Caco-2 (cell line): ENCODE measurements at regions of chr13 and their contacts with region 1.

Region 1: DNA sequence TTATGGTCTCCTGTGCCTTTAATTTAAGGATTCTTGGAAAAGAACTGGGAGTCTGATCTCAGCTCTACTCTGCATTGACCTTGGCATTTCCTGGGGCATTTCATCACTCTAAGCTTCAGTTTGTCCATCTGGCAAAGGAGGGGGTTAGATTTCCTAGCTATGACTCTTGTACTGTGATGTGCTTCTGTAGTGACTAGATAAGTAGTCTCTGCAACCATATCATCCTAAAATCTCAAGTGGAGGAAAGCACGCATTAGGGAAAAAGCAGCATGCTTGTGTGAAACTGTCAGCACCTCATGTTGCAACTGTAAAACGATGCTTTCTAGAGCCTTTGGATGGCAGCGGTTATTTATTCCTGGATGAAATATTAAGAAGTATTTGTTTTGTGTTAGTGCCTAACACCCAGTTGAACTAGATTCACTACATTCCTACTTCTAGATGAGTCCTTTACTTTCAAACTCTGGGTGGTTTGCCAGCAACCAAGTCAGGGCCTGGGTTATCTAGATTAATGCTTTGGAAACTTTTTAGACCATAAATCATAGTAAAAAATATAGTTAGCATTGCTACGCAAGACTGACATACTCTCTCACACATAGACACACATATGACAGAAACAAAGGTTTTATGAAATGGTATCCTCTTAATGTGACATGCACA is 6.8 kb downstream of the WDFY2 start:
- DNase-seq: peak in 1 of 2 experiments; percentile 20
- H3K4me3 ChIP-seq: no peak overlapping the region
- H3K4me3 Mint-ChIP-seq: no peak overlapping the region
- H3K27ac Mint-ChIP-seq: no peak overlapping the region
- H3K4me1 ChIP-seq: peaks cover 10% of the 10 kb centered on the region
- H3K4me1 Mint-ChIP-seq: peaks cover under 1% of the 10 kb centered on the region
- H3K27me3 ChIP-seq: no peaks in the 10 kb centered on the region
- H3K27me3 Mint-ChIP-seq: no peaks in the 10 kb centered on the region
- CTCF ChIP-seq: no peak

Region 2: GRCh38 chr13:51724721-51725120 is 133.6 kb after region 1 on chr13:
- CTCF ChIA-PET with region 1: no interaction called
- POLR2A ChIA-PET with region 1: no interaction called
- intact Hi-C with region 1: no loop called
- DNase-seq: no peak
- H3K4me3 ChIP-seq: no peak overlapping the region
- H3K4me3 Mint-ChIP-seq: no peak overlapping the region
- H3K27ac Mint-ChIP-seq: no peak overlapping the region
- H3K4me1 ChIP-seq: 0 out of 2 replicates have a peak, but pooled peaks cover 3% of the 10 kb centered on the region
- H3K4me1 Mint-ChIP-seq: no peaks in the 10 kb centered on the region
- H3K27me3 ChIP-seq: no peaks in the 10 kb centered on the region
- H3K27me3 Mint-ChIP-seq: no peaks in the 10 kb centered on the region
- CTCF ChIP-seq: no peak

Region 3: GRCh38 chr13:51781246-51782022 is 190.3 kb after region 1 on chr13:
- CTCF ChIA-PET with region 1: no interaction called
- POLR2A ChIA-PET with region 1: no interaction called
- intact Hi-C with region 1: loop called (anchors 5 kb)
- DNase-seq: no peak
- H3K4me3 ChIP-seq: no peak overlapping the region
- H3K4me3 Mint-ChIP-seq: no peak overlapping the region
- H3K27ac Mint-ChIP-seq: no peak overlapping the region
- H3K4me1 ChIP-seq: peaks cover 10% of the 10 kb centered on the region; the same call in 1 of the 2 replicates
- H3K4me1 Mint-ChIP-seq: peaks cover 11% of the 10 kb centered on the region
- H3K27me3 ChIP-seq: no peaks in the 10 kb centered on the region
- H3K27me3 Mint-ChIP-seq: no peaks in the 10 kb centered on the region
- CTCF ChIP-seq: peak; percentile 18 to 23